IMR-90 (cell line): ENCODE measurements at regions of chr3 and their contacts with region 1.

Region 1: DNA sequence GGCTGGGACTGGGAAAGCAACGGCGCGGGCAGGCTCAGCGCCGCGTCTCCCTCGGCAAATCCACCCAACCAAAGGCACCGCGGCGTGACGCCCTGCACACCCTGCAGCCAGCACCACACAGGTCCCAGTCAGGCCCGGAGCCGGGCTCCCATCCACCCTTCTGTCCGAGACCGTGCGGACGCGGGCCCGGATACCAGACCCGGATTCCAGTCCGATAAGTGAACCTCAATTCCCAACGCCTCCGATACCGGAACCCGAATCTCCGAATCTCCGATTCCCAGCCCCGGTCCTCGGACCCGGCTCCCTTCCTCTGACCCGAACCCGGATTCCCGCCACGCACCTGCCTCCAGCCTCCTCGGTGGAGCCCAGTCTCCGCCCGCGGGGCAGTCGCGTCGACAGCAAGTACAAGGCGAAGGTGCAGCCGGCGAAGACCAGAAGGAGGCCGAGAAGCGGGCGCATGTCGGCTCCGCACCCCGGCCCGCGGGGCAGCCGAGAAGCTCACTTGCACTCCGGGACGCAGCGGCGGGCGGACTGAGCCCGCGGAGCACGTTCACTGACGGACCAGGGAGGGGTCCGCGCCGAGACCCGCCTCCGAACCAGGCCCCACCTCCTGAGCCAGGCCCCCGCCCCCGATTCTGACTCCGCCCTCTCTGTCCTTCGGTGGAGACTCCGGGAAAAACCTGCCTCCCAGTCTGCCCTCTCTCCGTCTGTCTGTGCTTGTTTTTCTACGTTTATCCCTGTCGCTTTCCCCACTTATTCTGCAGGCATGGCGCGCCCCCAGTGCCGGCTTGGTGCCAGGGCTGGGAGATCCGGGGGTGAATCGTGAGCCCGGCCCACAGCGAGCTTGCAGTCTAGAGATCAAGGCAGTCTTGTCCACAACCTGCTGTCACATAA is at the start of gene TMEM41A:
- DNase-seq: peak; percentile 87
- ATAC-seq: peak; percentile 100
- H3K4me3 ChIP-seq: peak within 1 kb of the TSS; percentile 89
- H3K27ac ChIP-seq: peak within 1 kb of the TSS; percentile 76
- H3K4me1 ChIP-seq: peaks cover 4% of the 10 kb centered on the region; the same call in 1 of the 2 replicates
- H3K27me3 ChIP-seq: peaks cover 9% of the 10 kb centered on the region
- CTCF ChIP-seq: no peak
- POLR2A ChIP-seq: peak; percentile 80
- RAD21 ChIP-seq: peak; percentile 11; the same call in 1 of the 2 replicates
- total RNA-seq, gene TMEM41A: 10.6 and 11.9 TPM in 2 replicates

Region 2: GRCh38 chr3:185215873-185216606 is 282.7 kb before region 1 on chr3:
- CTCF ChIA-PET with region 1: no interaction called
- POLR2A ChIA-PET with region 1: no interaction called
- dilution Hi-C with region 1: no loop called
- in situ Hi-C with region 1: no loop called
- intact Hi-C with region 1: no loop called
- DNase-seq: peak; percentile 23
- ATAC-seq: 0 out of 2 replicates have a peak, but pooled peaks have one; percentile 48
- H3K4me3 ChIP-seq: no peak overlapping the region
- H3K27ac ChIP-seq: no peak overlapping the region
- H3K4me1 ChIP-seq: peaks cover 3% of the 10 kb centered on the region; the same call in 1 of the 2 replicates
- H3K27me3 ChIP-seq: no peaks in the 10 kb centered on the region
- CTCF ChIP-seq: peak; percentile 61
- POLR2A ChIP-seq: no peak
- RAD21 ChIP-seq: peak; percentile 64

Region 3: GRCh38 chr3:185444329-185444728 is 54.4 kb before region 1 on chr3:
- CTCF ChIA-PET with region 1: no interaction called
- POLR2A ChIA-PET with region 1: no interaction called
- dilution Hi-C with region 1: no loop called
- in situ Hi-C with region 1: no loop called
- intact Hi-C with region 1: no loop called
- DNase-seq: no peak
- ATAC-seq: no peak
- H3K4me3 ChIP-seq: no peak overlapping the region
- H3K27ac ChIP-seq: no peak overlapping the region
- H3K4me1 ChIP-seq: no peaks in the 10 kb centered on the region
- H3K27me3 ChIP-seq: no peaks in the 10 kb centered on the region
- CTCF ChIP-seq: no peak
- POLR2A ChIP-seq: no peak
- RAD21 ChIP-seq: no peak

Region 4: GRCh38 chr3:185549111-185549510 is 50.4 kb after region 1 on chr3:
- CTCF ChIA-PET with region 1: no interaction called
- POLR2A ChIA-PET with region 1: no interaction called
- dilution Hi-C with region 1: no loop called
- in situ Hi-C with region 1: no loop called
- intact Hi-C with region 1: loop called (anchors 2 kb)
- DNase-seq: peak; percentile 98
- ATAC-seq: peak; percentile 73
- H3K4me3 ChIP-seq: no peak overlapping the region
- H3K27ac ChIP-seq: no peak overlapping the region
- H3K4me1 ChIP-seq: peaks cover 5% of the 10 kb centered on the region
- H3K27me3 ChIP-seq: no peaks in the 10 kb centered on the region
- CTCF ChIP-seq: no peak
- POLR2A ChIP-seq: no peak
- RAD21 ChIP-seq: no peak

Region 5: DNA sequence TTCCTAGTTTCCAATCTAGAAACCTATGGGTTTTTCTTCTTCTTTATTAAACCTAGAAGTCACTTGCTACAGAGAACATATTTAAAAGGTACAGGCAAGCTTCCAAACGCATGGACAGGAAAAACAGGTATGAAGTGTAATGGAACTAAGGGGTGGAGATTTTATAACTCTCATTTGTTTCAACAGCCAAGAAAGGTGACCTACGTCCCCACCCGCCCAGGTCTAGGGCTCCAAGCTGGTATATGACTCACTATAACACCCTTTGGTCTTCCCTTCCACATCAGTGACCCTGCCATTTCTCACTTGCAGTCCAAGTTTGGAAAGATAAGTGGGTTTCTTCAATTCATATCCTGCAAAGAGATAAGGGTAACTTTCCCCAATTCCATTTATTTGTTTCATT is 59.6 kb after region 1 on chr3:
- CTCF ChIA-PET with region 1: interaction called, 3 read pairs
- POLR2A ChIA-PET with region 1: no interaction called
- dilution Hi-C with region 1: no loop called
- in situ Hi-C with region 1: no loop called
- intact Hi-C with region 1: loop called (anchors 1 kb)
- DNase-seq: no peak
- ATAC-seq: peak; percentile 22; the same call in 1 of the 2 replicates
- H3K4me3 ChIP-seq: no peak overlapping the region
- H3K27ac ChIP-seq: no peak overlapping the region
- H3K4me1 ChIP-seq: peaks cover 2% of the 10 kb centered on the region; the same call in 1 of the 2 replicates
- H3K27me3 ChIP-seq: peaks cover 12% of the 10 kb centered on the region
- CTCF ChIP-seq: no peak
- POLR2A ChIP-seq: no peak
- RAD21 ChIP-seq: no peak

Region 6: DNA sequence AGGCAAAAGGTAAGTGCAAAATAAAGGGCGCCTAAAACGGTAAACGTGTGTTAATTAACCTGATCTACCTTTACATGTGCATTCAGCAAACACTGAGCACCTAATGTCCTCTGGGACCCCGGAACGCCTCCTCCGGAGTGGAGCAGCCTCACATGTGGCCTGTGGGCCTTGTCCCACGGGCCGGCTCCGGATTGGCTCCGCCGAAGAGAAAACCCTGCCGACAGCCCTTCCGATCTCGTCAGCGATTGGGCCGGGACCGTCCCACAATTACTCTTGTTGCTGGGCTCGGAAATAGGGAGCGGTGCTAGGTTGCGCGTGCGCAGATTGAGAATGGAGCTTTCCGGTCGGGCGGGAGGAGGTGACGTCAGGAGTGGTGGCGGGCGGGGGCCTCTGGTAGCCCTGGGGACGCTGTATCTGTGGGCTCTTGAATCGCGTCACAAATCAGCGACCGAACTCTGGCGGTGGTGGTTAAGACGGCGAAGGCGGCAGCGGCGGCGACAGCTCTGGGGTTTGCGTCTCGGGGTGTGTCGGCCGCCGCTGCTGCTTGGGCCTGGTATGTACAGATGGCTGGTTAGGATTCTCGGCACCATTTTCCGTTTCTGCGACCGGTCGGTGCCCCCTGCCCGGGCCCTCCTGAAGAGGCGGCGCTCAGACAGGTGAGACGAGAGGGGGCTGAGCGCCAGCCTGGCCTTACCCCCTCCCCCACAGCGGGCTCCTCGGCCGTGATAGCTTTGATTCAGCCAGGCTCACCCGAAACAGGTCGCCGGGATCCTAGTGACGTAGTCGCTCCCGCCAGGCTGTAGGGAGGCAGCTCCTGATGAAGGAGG is 87.3 kb after region 1 on chr3 and contains the start of gene SENP2:
- CTCF ChIA-PET with region 1: no interaction called
- POLR2A ChIA-PET with region 1: no interaction called
- dilution Hi-C with region 1: no loop called
- in situ Hi-C with region 1: no loop called
- intact Hi-C with region 1: loop called (anchors 1 kb)
- DNase-seq: peak; percentile 98
- ATAC-seq: peak; percentile 98
- H3K4me3 ChIP-seq: peak within 1 kb of the TSS; percentile 63
- H3K27ac ChIP-seq: peak within 1 kb of the TSS; percentile 59
- H3K4me1 ChIP-seq: no peaks in the 10 kb centered on the region
- H3K27me3 ChIP-seq: no peaks in the 10 kb centered on the region
- CTCF ChIP-seq: no peak
- POLR2A ChIP-seq: peak; percentile 93
- RAD21 ChIP-seq: no peak
- total RNA-seq, gene SENP2: 15.2 and 31.1 TPM in 2 replicates

Region 7: GRCh38 chr3:185789891-185790830 is 291.4 kb after region 1 on chr3:
- CTCF ChIA-PET with region 1: no interaction called
- POLR2A ChIA-PET with region 1: no interaction called
- dilution Hi-C with region 1: no loop called
- in situ Hi-C with region 1: no loop called
- intact Hi-C with region 1: no loop called
- DNase-seq: peak; percentile 33
- ATAC-seq: no peak
- H3K4me3 ChIP-seq: no peak overlapping the region
- H3K27ac ChIP-seq: no peak overlapping the region
- H3K4me1 ChIP-seq: peaks cover 6% of the 10 kb centered on the region
- H3K27me3 ChIP-seq: no peaks in the 10 kb centered on the region
- CTCF ChIP-seq: no peak
- POLR2A ChIP-seq: no peak
- RAD21 ChIP-seq: no peak